CD8-positive, alpha-beta T cell (primary cell): ENCODE measurements at regions of chr1 and their contacts with region 1.

Region 1: DNA sequence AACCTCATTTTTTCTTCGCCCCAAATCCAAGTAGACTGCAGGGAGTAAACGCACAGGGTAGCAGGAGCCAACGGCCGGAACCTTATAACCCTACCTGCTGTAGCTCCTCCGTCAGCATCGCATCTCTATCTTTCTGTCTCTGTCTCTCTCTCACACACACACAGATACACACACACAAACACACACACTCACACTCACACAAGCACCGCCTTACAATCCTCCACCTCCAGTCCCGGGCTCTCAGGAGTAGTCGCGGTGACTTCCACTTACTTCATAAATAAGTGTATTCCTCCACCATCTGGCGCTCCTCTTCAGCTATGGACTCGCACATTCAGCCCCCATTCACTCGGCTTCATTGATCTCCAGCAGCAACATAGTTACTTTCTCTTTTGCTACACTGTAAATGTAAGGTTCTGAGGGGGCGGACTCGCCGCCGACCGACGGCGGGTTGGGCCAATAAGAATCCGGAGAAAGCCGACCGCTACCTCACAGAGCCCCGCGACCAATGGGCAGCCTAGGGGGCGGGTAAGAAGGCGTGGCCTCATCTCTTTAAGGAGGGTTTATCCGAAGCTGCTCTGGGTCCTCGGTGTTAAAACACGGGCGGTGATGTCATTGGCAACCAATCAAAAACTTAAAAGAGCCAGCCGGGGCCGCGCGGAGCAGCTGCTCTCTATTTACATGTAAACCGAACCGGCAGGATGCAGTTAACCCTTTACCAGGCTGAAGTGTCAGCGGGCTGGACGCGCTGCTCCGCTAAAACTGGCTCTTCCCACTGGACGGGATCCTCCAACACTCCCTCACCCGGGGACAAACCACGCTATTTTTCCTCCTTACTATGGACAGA is at the start of gene DUSP10:
- DNase-seq: peak; percentile 96 to 100 (median 98)
- ATAC-seq: peak; percentile 87
- H3K4me3 ChIP-seq: peak within 1 kb of the TSS; percentile 65 to 76
- H3K4me3 Mint-ChIP-seq: no peak within 1 kb of the TSS
- H3K27ac ChIP-seq: peak within 1 kb of the TSS; percentile 90 to 99
- H3K27ac Mint-ChIP-seq: no peak within 1 kb of the TSS
- H3K4me1 ChIP-seq: peaks cover 17% of the 10 kb centered on the region
- H3K4me1 Mint-ChIP-seq: peaks cover 30% of the 10 kb centered on the region
- H3K27me3 ChIP-seq: no peaks in the 10 kb centered on the region
- H3K27me3 Mint-ChIP-seq: no peaks in the 10 kb centered on the region
- CTCF ChIP-seq: no peak
- total RNA-seq, gene DUSP10: 63.0 to 64.3 TPM

Region 2: DNA sequence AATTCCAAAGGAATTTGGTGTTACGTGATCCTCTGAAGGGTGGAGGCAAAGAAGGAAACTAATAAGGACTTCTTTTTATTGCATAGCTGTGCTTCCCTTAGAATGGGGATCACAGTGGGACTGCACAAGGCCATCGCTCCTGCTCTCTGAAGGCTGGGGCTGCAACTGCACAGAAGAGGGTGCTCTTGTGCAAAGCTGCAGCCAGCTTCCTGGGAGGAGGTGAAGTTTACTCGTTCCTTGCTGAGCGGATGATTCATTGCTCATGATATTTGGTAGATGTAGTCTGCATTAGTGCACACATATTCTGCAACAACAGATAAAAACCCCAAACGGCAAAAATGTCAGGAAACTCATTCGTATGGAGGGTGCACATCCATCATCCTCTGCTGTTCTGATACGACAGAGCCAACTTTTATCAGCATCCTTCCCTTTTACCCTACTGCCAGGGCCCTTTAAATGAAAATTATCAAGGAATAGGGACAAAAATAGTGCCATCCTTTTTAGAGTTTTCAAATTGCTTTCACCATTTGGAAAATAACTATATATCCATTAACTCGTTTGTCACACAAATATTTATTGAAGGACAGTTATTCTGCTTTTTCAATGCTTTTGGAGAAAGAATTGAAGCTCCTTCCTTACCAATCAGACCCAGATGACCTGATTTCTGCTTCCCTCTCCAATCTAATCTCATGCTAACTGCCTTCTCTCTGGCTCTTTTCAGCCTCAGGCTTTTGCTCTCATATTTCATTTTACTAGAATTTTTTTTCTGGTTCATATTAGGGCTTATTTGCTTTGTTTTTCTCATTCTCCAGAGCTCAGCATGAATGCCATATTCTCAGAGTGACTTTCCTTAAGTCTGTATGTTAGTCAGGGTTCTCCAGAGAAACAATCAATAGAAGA is 263.6 kb before region 1 on chr1:
- CTCF ChIA-PET with region 1: interaction called, 10 read pairs
- POLR2A ChIA-PET with region 1: no interaction called
- intact Hi-C with region 1: loop called (anchors 2 to 5 kb)
- DNase-seq: peak; percentile 16 to 74 (median 51)
- ATAC-seq: peak; percentile 69
- H3K4me3 ChIP-seq: no peak overlapping the region
- H3K4me3 Mint-ChIP-seq: no peak overlapping the region
- H3K27ac ChIP-seq: no peak overlapping the region
- H3K27ac Mint-ChIP-seq: no peak overlapping the region
- H3K4me1 ChIP-seq: no peaks in the 10 kb centered on the region
- H3K4me1 Mint-ChIP-seq: peaks cover 2% of the 10 kb centered on the region
- H3K27me3 ChIP-seq: peaks cover 0 to 2% of the 10 kb centered on the region in 2 experiments
- H3K27me3 Mint-ChIP-seq: peaks cover 6% of the 10 kb centered on the region
- CTCF ChIP-seq: peak; percentile 29

Region 3: GRCh38 chr1:221643404-221644144 is 98.4 kb before region 1 on chr1:
- CTCF ChIA-PET with region 1: interaction called, 3 read pairs
- POLR2A ChIA-PET with region 1: no interaction called
- intact Hi-C with region 1: loop called in 1 of 2 experiments (anchors 5 kb)
- DNase-seq: no peak
- ATAC-seq: no peak
- H3K4me3 ChIP-seq: no peak overlapping the region
- H3K4me3 Mint-ChIP-seq: no peak overlapping the region
- H3K27ac ChIP-seq: no peak overlapping the region
- H3K27ac Mint-ChIP-seq: no peak overlapping the region
- H3K4me1 ChIP-seq: no peaks in the 10 kb centered on the region
- H3K4me1 Mint-ChIP-seq: no peaks in the 10 kb centered on the region
- H3K27me3 ChIP-seq: no peaks in the 10 kb centered on the region
- H3K27me3 Mint-ChIP-seq: no peaks in the 10 kb centered on the region
- CTCF ChIP-seq: no peak

Region 4: DNA sequence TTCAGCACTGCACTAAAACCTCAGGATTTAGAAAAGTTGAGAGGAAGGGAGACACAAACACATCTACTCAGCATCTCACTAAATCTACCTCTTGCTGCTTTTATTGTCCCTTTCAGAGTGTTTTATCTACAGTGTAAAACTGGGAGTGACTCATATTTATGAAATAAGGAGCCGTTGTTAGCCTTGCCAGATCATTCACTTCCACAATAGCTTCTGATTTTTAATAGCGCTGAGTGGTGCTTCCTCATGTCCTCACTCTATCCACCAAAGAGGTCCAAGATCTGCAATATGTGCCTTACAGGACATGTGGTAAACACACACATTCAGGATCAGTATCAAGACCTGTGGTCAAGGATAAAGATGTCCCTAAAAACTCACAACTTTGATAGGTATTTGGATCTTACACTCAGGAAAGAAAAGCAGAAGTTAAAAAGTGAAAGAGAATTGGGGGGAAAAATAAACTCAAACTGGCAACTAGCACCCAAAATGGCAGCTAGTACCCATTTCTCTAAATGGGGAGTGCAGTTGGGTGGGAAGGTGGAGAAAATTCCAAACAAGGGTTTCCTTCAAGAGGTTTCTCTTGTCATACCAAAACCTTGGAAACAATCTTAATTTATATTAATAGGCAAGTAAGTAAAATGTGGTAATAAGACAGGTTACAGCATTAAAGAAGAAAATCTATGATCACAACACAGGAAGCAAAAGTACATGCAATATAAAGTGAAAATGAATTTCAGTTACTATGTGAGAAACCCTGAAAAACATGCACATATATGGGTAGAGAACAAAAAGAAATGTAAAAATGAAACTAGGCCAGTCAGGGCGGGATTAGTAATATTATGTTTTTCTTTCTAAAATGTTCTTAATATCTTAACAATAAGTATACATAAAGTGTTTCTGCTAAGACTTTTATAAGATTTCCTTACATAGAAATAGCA is 15.9 kb before region 1 on chr1:
- CTCF ChIA-PET with region 1: interaction called, 10 read pairs
- POLR2A ChIA-PET with region 1: interaction called, 32 read pairs
- intact Hi-C with region 1: loop called in 1 of 2 experiments (anchors 2 kb)
- DNase-seq: peak in 1 of 9 experiments; percentile 50
- ATAC-seq: peak; percentile 75
- H3K4me3 ChIP-seq: no peak overlapping the region
- H3K4me3 Mint-ChIP-seq: peak overlapping the region; percentile 20
- H3K27ac ChIP-seq: peak overlapping the region in 1 of 2 experiments; percentile 53
- H3K27ac Mint-ChIP-seq: peak overlapping the region; percentile 68
- H3K4me1 ChIP-seq: peaks cover 33% of the 10 kb centered on the region
- H3K4me1 Mint-ChIP-seq: peaks cover 48% of the 10 kb centered on the region
- H3K27me3 ChIP-seq: no peaks in the 10 kb centered on the region
- H3K27me3 Mint-ChIP-seq: no peaks in the 10 kb centered on the region
- CTCF ChIP-seq: no peak

Region 5: DNA sequence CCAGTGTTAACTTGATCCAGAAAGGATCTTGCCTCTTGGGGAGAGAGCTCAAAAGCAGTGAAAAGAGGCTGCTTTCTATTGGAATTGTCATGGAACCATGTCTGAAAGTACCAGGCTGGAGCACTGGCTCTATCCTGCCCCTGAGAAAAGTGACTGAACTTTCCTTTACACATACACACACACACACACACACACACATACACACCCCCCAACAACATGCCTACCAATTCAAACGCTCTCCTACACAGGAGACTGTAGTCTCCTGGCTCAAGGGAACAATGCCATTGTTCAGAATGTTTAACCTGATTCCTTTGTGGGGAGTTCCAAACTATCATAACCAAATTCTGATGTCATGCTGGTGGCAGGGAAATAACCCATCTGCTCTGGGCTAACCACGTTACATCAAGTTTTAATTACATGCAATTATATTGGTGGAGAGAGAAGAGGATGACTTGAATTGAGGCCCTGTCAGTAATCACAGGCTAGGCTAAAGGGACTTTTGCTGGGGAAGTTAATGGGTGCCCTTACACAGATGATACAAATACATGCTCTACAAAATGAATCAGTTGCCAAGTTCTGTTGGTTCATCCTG is 52.2 kb after region 1 on chr1:
- CTCF ChIA-PET with region 1: no interaction called
- POLR2A ChIA-PET with region 1: no interaction called
- intact Hi-C with region 1: no loop called
- DNase-seq: peak in 2 of 9 experiments; percentile 80 to 87
- ATAC-seq: peak; percentile 76
- H3K4me3 ChIP-seq: no peak overlapping the region
- H3K4me3 Mint-ChIP-seq: no peak overlapping the region
- H3K27ac ChIP-seq: no peak overlapping the region
- H3K27ac Mint-ChIP-seq: peak overlapping the region; percentile 90
- H3K4me1 ChIP-seq: no peaks in the 10 kb centered on the region
- H3K4me1 Mint-ChIP-seq: peaks cover 18% of the 10 kb centered on the region
- H3K27me3 ChIP-seq: no peaks in the 10 kb centered on the region
- H3K27me3 Mint-ChIP-seq: no peaks in the 10 kb centered on the region
- CTCF ChIP-seq: no peak

Region 6: GRCh38 chr1:221839796-221840395 is 98.0 kb after region 1 on chr1:
- CTCF ChIA-PET with region 1: no interaction called
- POLR2A ChIA-PET with region 1: no interaction called
- intact Hi-C with region 1: loop called in 1 of 2 experiments (anchors 1 kb)
- DNase-seq: peak; percentile 34 to 90 (median 61)
- ATAC-seq: peak; percentile 77
- H3K4me3 ChIP-seq: no peak overlapping the region
- H3K4me3 Mint-ChIP-seq: no peak overlapping the region
- H3K27ac ChIP-seq: peak overlapping the region in 1 of 2 experiments; percentile 54
- H3K27ac Mint-ChIP-seq: peak overlapping the region; percentile 64
- H3K4me1 ChIP-seq: peaks cover 5% of the 10 kb centered on the region
- H3K4me1 Mint-ChIP-seq: peaks cover 22% of the 10 kb centered on the region
- H3K27me3 ChIP-seq: peaks cover 0 to 3% of the 10 kb centered on the region in 2 experiments
- H3K27me3 Mint-ChIP-seq: peaks cover 2% of the 10 kb centered on the region
- CTCF ChIP-seq: no peak

Region 7: DNA sequence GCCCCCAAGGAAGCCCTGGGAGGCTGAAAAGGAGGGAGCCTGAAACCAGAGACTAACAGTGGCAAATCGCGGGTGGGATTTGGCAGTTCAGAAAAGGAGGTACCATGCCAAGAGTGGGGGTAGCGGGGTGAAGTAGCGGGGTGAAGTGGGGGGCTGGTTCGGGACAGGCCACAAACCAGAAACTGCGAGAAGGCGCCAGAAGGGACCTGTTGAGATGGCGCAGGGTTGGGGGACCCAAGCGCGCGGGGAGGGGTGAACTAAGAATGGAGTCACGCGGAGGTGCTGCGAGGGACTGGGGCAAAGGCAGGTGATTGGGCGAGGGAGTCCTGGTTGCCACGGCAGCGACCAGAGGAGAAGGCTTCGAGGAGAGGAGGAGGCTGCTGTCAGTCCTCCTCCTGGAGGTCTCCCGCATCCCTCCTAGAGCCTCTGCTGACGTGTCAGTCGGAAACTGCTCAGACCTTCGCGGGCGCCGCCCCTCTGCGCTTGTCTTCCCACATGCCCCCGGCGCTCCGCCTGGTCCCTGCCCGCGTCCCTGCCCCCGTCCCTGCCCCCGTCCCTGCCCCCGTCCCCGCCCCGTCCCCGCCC is 875.5 kb after region 1 on chr1:
- CTCF ChIA-PET with region 1: no interaction called
- POLR2A ChIA-PET with region 1: no interaction called
- intact Hi-C with region 1: loop called in 1 of 2 experiments (anchors 5 kb)
- DNase-seq: peak; percentile 88 to 99 (median 93)
- ATAC-seq: peak; percentile 91
- H3K4me3 ChIP-seq: peak overlapping the region; percentile 67 to 68
- H3K4me3 Mint-ChIP-seq: peak overlapping the region; percentile 93
- H3K27ac ChIP-seq: peak overlapping the region; percentile 83
- H3K27ac Mint-ChIP-seq: peak overlapping the region; percentile 98
- H3K4me1 ChIP-seq: peaks cover 20% of the 10 kb centered on the region
- H3K4me1 Mint-ChIP-seq: peaks cover 31% of the 10 kb centered on the region
- H3K27me3 ChIP-seq: peaks cover 0 to 3% of the 10 kb centered on the region in 2 experiments
- H3K27me3 Mint-ChIP-seq: peaks cover 16% of the 10 kb centered on the region
- CTCF ChIP-seq: no peak

Region 8: DNA sequence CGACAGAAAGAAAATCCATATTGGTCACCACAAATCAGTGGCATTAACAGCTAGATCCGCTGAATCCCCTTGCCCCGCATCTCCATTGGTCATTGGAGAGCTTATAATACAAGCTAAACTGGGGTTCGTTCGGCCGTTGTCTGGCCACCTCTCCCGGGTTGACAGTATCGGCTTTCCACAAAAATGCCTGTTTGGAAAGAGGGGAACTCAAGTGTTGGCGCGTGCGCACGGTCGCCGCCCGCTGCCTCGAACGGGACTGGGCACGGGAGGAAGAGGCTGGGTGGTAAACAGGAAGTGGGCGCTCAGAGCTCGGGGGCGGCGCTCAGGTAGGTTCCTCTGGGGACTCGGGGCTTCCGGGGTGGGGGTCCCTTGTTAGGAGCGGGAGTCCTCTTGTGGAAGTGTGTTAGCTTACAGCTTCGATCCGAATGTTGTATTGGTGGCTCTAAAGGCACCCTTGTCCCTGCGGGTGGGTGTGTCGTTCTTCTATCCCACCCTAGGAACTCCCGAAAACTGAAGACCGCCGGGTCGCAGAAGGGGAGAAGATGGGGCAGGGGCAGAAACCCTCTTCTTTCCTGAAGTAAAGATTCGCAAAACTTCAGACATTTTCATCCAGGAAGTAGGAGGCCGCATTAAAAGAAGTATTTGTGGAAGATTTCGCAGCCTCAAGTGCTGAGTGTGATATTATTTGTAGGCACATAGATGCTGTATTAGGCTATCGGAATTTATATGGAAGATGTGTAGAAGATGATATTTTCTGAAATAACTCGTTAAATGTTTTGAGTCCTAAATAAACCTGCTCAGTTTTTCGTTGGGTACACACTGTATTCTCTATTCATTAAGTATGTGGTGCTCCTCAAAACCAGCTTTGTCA is 971.4 kb after region 1 on chr1:
- CTCF ChIA-PET with region 1: interaction called, 3 read pairs
- POLR2A ChIA-PET with region 1: interaction called, 14 read pairs
- intact Hi-C with region 1: no loop called
- DNase-seq: peak; percentile 87 to 98 (median 94)
- ATAC-seq: peak; percentile 75
- H3K4me3 ChIP-seq: peak overlapping the region; percentile 90 to 94
- H3K4me3 Mint-ChIP-seq: peak overlapping the region; percentile 96
- H3K27ac ChIP-seq: peak overlapping the region; percentile 93 to 99
- H3K27ac Mint-ChIP-seq: peak overlapping the region; percentile 100
- H3K4me1 ChIP-seq: peaks cover 22% of the 10 kb centered on the region
- H3K4me1 Mint-ChIP-seq: peaks cover 54% of the 10 kb centered on the region
- H3K27me3 ChIP-seq: no peaks in the 10 kb centered on the region
- H3K27me3 Mint-ChIP-seq: no peaks in the 10 kb centered on the region
- CTCF ChIP-seq: no peak